ENCODE measurements at regions of chr9 and their contacts with region 1.

Region 1: DNA sequence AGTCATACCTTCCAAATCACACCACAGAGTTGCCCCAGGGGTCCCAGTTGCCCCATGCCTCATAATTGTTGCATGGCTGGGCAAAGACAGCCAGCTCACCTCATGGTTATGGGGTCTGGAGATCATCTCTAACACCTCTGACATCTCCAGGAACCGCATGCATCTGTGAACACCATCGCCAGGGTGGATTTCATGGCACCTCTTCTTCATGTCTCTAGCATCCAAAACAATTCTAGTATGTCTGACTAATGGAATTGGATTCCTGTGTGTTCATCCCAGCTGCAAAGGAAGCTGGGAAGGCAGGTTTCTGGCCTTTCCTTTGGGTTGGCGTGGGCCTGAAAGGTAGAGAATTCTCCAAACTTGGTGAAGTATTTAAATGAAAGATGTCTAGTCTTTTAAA is 122.3 kb upstream of the ABCA1 start:
- DNase-seq: no peak
- ATAC-seq: no peak
- H3K4me3 ChIP-seq: no peak overlapping the region
- H3K4me3 Mint-ChIP-seq: no peak overlapping the region
- H3K27ac ChIP-seq: no peak overlapping the region
- H3K27ac Mint-ChIP-seq: no peak overlapping the region
- H3K4me1 ChIP-seq: no peaks in the 10 kb centered on the region
- H3K4me1 Mint-ChIP-seq: peaks cover 9% of the 10 kb centered on the region
- H3K27me3 ChIP-seq: no peaks in the 10 kb centered on the region
- H3K27me3 Mint-ChIP-seq: no peaks in the 10 kb centered on the region
- CTCF ChIP-seq: no peak

Region 2: GRCh38 chr9:104984948-104985347 is 65.3 kb before region 1 on chr9:
- CTCF ChIA-PET with region 1: no interaction called
- POLR2A ChIA-PET with region 1: interaction called, 10 read pairs
- intact Hi-C with region 1: no loop called
- DNase-seq: no peak
- ATAC-seq: no peak
- H3K4me3 ChIP-seq: no peak overlapping the region
- H3K4me3 Mint-ChIP-seq: no peak overlapping the region
- H3K27ac ChIP-seq: no peak overlapping the region
- H3K27ac Mint-ChIP-seq: no peak overlapping the region
- H3K4me1 ChIP-seq: no peaks in the 10 kb centered on the region
- H3K4me1 Mint-ChIP-seq: peaks cover 3% of the 10 kb centered on the region
- H3K27me3 ChIP-seq: peaks cover 0 to 6% (median 2%) of the 10 kb centered on the region in 4 experiments
- H3K27me3 Mint-ChIP-seq: peaks cover 9% of the 10 kb centered on the region
- CTCF ChIP-seq: no peak

Region 3: DNA sequence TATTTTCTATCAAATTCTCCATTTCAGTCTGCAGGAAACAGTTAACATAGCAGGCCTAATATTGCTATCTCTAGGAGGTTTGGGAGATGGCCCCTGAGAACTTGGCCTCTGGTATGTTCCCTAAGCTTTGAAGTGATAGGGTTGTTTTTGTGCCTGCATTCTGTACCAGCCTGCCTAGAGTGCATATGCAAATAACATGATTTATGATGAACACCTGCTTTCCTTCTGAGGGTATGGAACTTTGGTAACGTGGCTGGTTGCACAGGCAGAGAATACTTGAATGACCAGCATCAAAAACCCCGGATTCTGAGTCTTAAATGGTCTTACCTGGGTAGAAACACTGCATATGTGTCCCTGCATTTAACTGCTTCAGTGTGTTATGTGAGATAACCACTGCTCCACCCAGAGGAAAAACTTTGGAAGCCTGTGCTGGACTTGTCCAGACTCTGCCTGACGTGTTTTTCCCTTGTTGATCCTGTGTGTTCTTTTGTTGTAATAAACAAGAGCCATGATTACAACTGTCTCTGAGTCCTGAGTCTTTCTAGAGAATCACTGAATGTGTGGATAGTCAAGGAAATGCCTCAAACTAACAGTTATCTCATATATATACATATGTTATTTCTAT is 11.0 kb before region 1 on chr9:
- CTCF ChIA-PET with region 1: no interaction called
- POLR2A ChIA-PET with region 1: no interaction called
- intact Hi-C with region 1: no loop called
- DNase-seq: no peak
- ATAC-seq: no peak
- H3K4me3 ChIP-seq: no peak overlapping the region
- H3K4me3 Mint-ChIP-seq: no peak overlapping the region
- H3K27ac ChIP-seq: no peak overlapping the region
- H3K27ac Mint-ChIP-seq: no peak overlapping the region
- H3K4me1 ChIP-seq: no peaks in the 10 kb centered on the region
- H3K4me1 Mint-ChIP-seq: peaks cover 2% of the 10 kb centered on the region
- H3K27me3 ChIP-seq: no peaks in the 10 kb centered on the region
- H3K27me3 Mint-ChIP-seq: peaks cover 10% of the 10 kb centered on the region
- CTCF ChIP-seq: no peak